ENCODE measurements at regions of chr6 and their contacts with region 1.

Region 1: DNA sequence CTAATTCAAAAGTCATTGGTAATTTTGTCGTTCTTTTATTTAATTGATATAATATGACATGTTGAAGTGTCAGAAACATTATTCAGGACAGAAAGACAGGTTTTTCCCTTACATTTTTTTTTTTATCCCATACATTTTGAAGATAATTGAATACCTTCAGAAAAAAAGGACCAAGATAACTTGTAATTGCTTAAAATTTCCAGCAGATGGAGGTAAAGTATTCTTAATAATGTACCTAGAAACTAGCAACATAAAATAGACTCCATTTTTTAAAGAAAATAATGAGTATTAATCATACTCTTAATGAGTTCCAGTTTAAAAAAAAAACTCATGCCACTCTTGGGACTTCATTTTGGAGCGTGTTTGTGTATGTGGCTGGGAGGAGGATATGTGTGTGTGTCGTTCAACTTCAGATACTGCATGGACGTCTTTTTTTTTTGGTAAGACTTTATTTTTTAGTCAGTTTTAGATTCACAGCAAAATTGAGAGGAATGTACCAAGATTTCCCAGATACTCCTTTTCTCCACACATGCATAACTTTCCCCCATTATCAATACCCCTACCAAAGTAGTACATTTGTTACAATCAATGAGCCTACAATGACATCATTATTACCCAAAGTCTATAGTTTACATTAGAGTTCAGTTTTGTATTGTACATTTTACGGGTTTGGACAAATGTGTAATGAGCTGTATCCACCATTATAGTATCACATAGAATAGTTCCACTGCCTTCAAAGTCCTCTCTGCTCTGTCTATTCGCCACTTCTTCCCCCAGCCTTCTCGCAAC is 79.4 kb downstream of the ROS1 start:
- DNase-seq: no peak
- ATAC-seq: no peak
- H3K4me3 Mint-ChIP-seq: no peak overlapping the region
- H3K27ac Mint-ChIP-seq: no peak overlapping the region
- H3K4me1 Mint-ChIP-seq: no peaks in the 10 kb centered on the region
- H3K27me3 Mint-ChIP-seq: peaks cover 12% of the 10 kb centered on the region

Region 2: DNA sequence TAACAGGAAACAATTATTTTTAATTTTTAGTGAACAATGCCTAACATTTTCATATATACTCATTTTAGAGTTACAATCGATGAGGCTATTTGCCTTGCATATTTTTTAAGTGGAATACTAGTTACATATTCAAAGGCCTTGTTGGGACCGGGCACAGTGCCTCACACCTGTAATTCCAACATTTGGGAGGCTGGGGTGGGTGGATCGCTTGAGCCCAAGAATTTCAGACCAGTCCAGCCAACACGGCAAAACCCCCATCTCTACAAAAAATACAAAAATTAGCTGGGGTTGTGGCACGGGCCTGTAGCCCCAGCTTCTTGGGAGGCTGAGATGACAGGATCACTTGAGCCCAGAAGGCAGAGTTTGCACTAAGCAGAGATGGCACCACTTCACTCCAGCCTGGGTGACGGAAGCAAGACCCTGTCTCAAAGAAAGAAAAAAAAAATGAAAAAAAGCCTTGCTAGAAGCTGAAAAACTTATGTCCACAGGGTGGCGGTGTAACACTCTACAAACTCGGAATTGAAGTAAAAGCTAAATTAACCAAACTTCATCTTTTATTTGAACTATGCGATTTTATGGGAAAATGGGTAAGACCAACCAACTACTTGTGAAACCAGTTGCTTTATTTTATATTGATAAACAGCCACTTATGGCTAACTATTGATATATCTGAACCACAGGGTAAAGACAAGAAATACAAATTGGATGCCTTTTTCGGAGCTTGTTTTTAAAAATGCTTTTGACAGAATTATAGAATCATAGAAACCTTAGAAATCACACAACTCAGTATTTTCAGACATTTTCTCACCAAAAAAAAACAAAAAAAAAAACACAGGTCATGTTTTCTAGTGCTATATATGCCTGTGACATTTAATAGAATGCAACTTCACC is 103.5 kb after region 1 on chr6:
- CTCF ChIA-PET with region 1: interaction called, 3 read pairs
- POLR2A ChIA-PET with region 1: no interaction called
- intact Hi-C with region 1: loop called in 1 of 2 experiments (anchors 2 kb)
- DNase-seq: peak; percentile 72
- ATAC-seq: no peak
- H3K4me3 Mint-ChIP-seq: no peak overlapping the region
- H3K27ac Mint-ChIP-seq: no peak overlapping the region
- H3K4me1 Mint-ChIP-seq: no peaks in the 10 kb centered on the region
- H3K27me3 Mint-ChIP-seq: peaks cover 12% of the 10 kb centered on the region

Region 3: GRCh38 chr6:117555882-117556498 is 209.7 kb after region 1 on chr6:
- CTCF ChIA-PET with region 1: no interaction called
- POLR2A ChIA-PET with region 1: no interaction called
- intact Hi-C with region 1: loop called (anchors 1 to 2 kb)
- DNase-seq: peak; percentile 69
- ATAC-seq: no peak
- H3K4me3 Mint-ChIP-seq: no peak overlapping the region
- H3K27ac Mint-ChIP-seq: no peak overlapping the region
- H3K4me1 Mint-ChIP-seq: peaks cover under 1% of the 10 kb centered on the region
- H3K27me3 Mint-ChIP-seq: no peaks in the 10 kb centered on the region

Region 4: GRCh38 chr6:117829594-117830319 is 483.4 kb after region 1 on chr6:
- CTCF ChIA-PET with region 1: no interaction called
- POLR2A ChIA-PET with region 1: no interaction called
- intact Hi-C with region 1: loop called in 1 of 2 experiments (anchors 5 kb)
- DNase-seq: no peak
- ATAC-seq: no peak
- H3K4me3 Mint-ChIP-seq: no peak overlapping the region
- H3K27ac Mint-ChIP-seq: no peak overlapping the region
- H3K4me1 Mint-ChIP-seq: no peaks in the 10 kb centered on the region
- H3K27me3 Mint-ChIP-seq: peaks cover 28% of the 10 kb centered on the region

Region 5: GRCh38 chr6:117976030-117976651 is 629.8 kb after region 1 on chr6:
- CTCF ChIA-PET with region 1: no interaction called
- POLR2A ChIA-PET with region 1: no interaction called
- intact Hi-C with region 1: loop called in 1 of 2 experiments (anchors 10 kb)
- DNase-seq: no peak
- ATAC-seq: no peak
- H3K4me3 Mint-ChIP-seq: no peak overlapping the region
- H3K27ac Mint-ChIP-seq: no peak overlapping the region
- H3K4me1 Mint-ChIP-seq: no peaks in the 10 kb centered on the region
- H3K27me3 Mint-ChIP-seq: peaks cover 14% of the 10 kb centered on the region

Measured in activated CD4-positive, alpha-beta T cell treated with anti-CD3 and anti-CD28 coated beads for 36 hours (primary cell).